ENCODE measurements at regions of chr4 and their contacts with region 1.

Region 1: DNA sequence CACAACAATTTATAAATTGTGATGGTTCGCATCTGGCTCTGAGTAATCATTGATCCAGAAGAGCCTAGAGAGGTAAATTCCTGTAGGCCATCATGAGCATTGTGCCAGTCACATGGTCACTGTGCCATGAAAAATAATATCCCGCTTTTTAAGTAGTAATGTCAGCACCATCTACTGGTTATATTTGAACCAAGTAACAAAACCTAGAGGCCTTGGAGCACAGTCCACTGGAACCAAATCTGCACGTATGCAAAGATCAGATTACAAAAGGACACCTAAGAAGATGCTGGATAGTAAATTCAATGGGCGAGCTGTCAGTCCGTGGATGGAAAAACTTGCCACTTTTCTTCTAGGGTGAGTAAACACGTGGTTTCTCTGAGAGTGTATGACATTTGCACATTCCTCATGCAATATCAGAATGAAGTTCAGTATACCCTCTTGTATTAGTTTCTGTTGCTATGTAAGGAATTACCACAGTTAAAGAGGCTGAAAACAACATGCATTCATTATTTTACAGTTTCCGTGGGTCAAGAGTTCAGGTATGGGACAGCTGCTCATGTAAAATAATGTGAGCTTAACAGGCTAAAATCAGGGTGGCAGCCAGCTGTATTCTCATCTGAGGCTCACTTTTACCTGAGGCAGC is 26.9 kb downstream of the FAM114A1 start:
- DNase-seq: no peak
- ATAC-seq: no peak
- H3K4me3 ChIP-seq: no peak overlapping the region
- H3K27ac ChIP-seq: no peak overlapping the region
- H3K4me1 ChIP-seq: no peaks in the 10 kb centered on the region
- H3K27me3 ChIP-seq: no peaks in the 10 kb centered on the region
- CTCF ChIP-seq: no peak
- POLR2A ChIP-seq: no peak

Region 2: DNA sequence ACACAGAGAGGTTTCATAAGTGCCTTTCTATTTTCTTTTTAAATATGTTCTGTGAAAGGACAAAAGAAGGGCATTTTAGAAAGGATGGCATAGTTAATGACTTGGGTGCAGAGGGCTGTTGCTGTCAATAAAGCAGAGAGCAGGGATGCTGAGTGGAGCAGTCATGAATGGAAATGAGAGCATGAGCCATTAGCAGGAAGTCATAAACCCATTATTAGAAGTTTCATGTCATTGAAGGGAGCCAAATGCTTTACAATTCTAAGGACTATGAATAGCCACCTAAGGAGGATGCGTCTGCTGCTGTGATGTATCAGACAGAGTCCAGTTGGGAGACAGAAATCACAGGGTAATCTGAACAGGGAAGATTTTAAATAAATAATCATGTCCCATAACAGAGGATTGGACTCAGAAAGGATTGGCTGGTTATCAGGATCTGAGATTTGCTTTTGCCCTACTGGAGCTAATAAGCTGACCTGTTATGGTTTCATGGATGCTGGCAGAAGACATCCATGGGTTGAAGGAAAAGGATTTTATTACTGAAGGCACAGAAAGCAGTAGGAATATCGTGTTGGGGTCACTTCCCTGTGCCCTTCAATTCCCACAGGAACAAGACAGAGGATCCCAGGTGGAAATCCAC is 240.3 kb after region 1 on chr4:
- in situ Hi-C with region 1: loop called in 2 of 4 experiments (anchors 10 kb)
- intact Hi-C with region 1: no loop called
- DNase-seq: no peak
- ATAC-seq: peak in 1 of 2 donors; percentile 21
- H3K4me3 ChIP-seq: no peak overlapping the region
- H3K27ac ChIP-seq: no peak overlapping the region
- H3K4me1 ChIP-seq: no peaks in the 10 kb centered on the region
- H3K27me3 ChIP-seq: no peaks in the 10 kb centered on the region
- CTCF ChIP-seq: no peak
- POLR2A ChIP-seq: no peak